Left colon (tissue), 2 donors: ENCODE measurements at regions of chr5 and their contacts with region 1.

Region 1: DNA sequence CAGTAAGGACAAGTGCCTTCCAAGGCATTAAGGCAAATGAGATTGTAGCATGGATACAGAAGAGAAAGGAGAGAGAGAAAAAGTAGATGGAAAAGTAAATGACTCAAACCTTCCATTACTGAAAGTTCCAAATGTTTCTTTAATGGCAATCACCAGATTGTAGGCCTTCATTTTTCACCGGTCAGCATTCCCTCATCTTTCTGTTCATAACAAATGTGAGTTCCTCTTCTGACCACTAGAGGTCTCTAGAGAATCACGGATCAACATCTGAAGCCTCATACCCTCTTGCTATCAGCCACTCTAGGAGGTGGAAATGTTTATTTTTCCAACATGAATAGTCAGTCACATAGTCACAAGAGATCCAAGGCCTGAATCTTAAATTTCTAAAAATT is 73.6 kb upstream of the RPS23 start:
- DNase-seq: no peak
- ATAC-seq: peak; percentile 88

Region 2: GRCh38 chr5:82307451-82307850 is 44.3 kb before region 1 on chr5:
- intact Hi-C with region 1: no loop called
- DNase-seq: no peak
- ATAC-seq: no peak

Region 3: DNA sequence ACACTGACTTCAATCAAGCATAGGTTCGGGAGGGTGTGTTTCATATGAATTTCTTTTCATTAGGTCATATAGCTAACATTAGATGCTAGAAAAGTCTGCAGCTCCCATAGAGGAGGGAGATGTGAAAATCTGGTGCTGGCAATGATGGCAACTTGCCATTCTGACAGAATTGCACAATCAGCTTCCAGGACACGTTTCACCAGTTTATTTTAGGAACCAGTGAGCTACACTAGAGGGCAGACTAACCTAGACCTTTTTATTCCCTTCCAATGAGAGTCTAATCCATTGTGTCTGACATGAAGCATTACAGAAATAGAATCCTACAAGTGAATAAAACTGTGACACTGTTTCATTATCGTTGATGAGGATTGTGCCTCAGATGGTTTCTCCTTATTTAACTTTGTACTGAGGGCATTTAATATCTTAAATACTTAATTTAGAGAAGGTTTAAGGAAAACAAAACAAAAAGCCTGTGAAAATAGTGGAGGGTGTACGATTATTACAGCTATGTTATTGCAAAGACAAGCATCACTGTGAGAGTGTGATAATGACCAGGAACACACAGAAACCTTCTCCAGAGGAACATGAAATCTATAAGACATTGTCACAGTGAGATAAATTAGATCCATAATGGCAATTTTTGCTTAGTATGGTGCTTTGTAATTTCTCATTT is 289.7 kb after region 1 on chr5:
- intact Hi-C with region 1: loop called in 1 of 2 experiments (anchors 10 kb)
- DNase-seq: peak; percentile 62 to 64
- ATAC-seq: peak; percentile 93

Region 4: DNA sequence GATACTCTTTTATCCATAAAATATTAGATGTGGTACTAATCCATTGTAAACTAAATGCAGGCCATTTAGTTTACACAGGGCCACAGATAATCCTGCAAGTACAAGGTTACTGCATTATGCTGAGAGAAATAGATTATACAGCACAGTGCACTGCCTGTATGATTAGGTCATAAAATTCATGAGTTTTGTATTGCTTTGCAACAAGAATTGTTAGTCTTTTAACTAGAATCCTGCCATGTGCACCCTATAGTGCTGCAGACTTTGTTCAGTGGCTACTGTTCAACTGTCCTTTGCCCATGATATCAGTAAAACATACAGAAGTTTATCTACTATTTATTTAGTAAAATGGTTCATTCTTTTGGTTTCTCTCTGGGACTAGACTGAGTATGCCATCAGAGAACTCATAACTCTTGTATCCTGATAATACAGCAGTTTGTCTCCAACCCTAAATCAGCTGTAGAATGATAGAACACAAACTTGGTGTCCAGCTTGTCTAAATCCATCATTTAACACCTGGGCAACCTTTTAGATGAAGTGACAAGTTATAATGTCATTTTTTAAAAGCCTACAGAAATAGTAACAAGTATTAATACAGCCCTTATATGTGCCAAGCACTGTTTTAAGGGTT is 434.2 kb after region 1 on chr5:
- intact Hi-C with region 1: loop called in 1 of 2 experiments (anchors 10 kb)
- DNase-seq: no peak
- ATAC-seq: peak; percentile 88

Region 5: GRCh38 chr5:83564069-83564749 is 1212.5 kb after region 1 on chr5:
- intact Hi-C with region 1: loop called in 1 of 2 experiments (anchors 5 kb)
- DNase-seq: no peak
- ATAC-seq: no peak